AG04449 (cell line): ENCODE measurements at regions of chr19 and their contacts with region 1.

Region 1: GRCh38 chr19:7919610-7920518 is at the start of gene SNAPC2:
- DNase-seq: peak; percentile 61
- H3K4me3 ChIP-seq: peak within 1 kb of the TSS; percentile 78
- CTCF ChIP-seq: no peak

Region 2: GRCh38 chr19:7852851-7853769 is 66.8 kb before region 1 on chr19:
- CTCF ChIA-PET with region 1: interaction called, 18 read pairs
- POLR2A ChIA-PET with region 1: no interaction called
- DNase-seq: no peak
- H3K4me3 ChIP-seq: no peak overlapping the region
- CTCF ChIP-seq: peak; percentile 86

Region 3: DNA sequence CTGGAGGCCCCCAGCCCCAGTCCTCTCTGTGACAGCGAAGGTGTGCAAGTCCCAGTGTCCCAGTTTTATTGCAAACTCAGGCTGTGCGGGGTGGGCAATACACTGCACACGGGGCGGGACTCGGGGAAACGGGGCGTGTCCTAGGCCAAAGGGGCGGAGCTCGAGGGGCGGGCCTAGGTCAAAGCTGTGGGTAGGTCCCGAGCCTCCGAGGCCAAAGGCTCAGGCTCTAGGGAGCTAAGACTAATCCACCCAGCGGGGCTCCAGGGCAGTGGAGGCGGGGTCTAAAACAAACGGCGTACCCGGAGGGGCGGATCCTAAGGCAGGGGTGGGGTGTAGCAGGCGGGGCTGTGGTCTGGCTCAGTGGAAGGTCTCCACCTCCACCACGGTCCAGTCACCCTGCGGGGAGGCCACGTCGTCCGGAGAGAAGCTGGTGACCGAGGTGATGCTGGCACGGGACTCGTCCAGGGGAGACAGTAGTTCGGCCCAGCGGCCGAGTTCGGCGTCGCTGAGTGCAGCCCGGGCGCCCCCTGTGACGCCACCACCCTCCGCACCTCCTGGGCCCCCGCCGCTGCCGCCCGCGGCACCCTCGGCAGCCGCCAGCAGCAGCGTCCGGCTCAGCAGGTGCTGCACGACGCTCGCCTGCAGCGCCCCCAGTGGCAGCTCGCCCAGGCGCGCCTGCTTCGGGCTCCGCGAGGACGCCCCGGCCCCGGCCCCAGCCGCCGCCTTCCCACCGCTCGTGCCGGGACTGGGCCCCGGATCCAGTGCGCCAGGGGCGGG is 51.0 kb before region 1 on chr19:
- CTCF ChIA-PET with region 1: interaction called, 29 read pairs
- POLR2A ChIA-PET with region 1: interaction called, 6 read pairs
- DNase-seq: no peak
- H3K4me3 ChIP-seq: peak overlapping the region; percentile 50
- CTCF ChIP-seq: peak; percentile 73

Region 4: GRCh38 chr19:7903244-7904073 is 16.4 kb before region 1 on chr19 and contains the start of gene MAP2K7:
- CTCF ChIA-PET with region 1: interaction called, 11 read pairs
- POLR2A ChIA-PET with region 1: interaction called, 13 read pairs
- DNase-seq: peak; percentile 88
- H3K4me3 ChIP-seq: peak within 1 kb of the TSS; percentile 91
- CTCF ChIP-seq: peak; percentile 72

Region 5: DNA sequence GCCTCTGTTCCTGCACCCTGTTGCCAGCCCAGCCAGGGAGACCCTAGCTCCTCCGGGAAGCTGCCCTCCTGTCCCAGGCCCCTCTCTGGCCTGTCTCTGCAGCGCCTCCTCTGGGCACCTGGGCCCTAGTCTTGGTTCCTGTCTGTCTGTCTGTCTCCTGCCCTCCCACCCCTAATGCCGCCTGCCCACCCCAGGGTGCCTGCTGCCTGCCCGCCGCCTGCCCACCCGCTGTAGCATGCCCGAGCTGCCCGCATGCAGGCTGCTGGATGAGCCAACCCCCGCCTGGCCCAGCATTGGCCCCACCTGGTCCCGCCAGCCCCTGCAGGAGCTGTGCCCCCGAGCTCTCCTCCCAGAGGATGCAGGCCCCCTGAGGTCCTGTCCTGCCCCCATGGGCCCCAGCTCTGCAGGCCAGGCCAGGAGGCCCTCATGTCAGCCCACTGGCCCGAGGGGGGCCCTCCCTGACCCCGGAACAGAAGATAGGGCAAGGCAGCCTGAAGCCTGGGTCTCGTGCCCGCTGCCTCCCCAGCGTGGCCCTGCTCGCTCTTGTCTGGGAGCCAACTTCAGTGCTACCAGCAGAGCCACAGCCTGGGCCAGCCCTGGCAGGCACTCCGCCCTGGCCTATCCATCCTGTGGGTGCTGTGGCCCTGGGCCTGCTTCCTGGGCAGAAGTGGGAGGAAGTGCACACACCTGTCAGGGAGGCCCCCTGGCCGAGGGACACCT is 11.0 kb before region 1 on chr19:
- CTCF ChIA-PET with region 1: interaction called, 11 read pairs
- POLR2A ChIA-PET with region 1: interaction called, 13 read pairs
- DNase-seq: no peak
- H3K4me3 ChIP-seq: no peak overlapping the region
- CTCF ChIP-seq: no peak

Region 6: DNA sequence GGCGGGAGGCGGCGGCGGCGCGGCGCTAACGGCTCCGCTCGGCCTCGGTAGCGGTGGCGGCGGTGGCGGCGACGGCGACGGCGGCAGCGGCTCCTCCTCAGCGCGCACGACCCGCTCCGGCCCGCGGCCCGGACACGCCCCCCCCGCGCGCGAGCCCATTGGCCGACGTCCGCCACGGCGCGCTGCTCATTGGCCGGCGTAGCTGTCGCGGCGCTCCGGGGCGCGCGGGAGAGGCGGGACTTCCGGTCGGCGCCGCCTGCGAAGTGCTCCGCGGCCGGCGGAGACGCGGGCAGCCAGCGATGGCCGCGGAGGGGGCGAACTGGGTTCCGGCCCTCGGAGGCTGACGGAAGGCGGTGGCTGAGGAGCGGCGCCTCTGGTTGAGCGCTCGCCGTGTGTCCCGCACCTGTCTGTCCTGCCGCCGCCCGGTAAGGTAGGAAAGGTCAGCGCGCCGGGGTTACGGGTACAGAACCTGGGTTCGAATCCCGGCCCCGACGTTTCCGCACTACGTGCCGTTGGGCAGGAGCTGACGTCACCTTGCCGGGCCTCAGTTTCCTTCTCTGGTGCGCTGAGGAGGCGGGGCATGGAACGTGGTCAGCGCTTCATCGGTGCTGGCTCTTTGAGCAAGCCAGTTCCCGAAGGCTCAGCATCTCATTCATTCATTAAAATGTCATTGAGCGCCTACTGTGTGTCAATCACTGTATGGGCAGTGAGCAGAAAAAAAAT is 85.8 kb after region 1 on chr19 and contains the start of gene ELAVL1:
- CTCF ChIA-PET with region 1: interaction called, 11 read pairs
- POLR2A ChIA-PET with region 1: no interaction called
- DNase-seq: peak; percentile 7
- H3K4me3 ChIP-seq: peak within 1 kb of the TSS; percentile 97
- CTCF ChIP-seq: no peak

Region 7: DNA sequence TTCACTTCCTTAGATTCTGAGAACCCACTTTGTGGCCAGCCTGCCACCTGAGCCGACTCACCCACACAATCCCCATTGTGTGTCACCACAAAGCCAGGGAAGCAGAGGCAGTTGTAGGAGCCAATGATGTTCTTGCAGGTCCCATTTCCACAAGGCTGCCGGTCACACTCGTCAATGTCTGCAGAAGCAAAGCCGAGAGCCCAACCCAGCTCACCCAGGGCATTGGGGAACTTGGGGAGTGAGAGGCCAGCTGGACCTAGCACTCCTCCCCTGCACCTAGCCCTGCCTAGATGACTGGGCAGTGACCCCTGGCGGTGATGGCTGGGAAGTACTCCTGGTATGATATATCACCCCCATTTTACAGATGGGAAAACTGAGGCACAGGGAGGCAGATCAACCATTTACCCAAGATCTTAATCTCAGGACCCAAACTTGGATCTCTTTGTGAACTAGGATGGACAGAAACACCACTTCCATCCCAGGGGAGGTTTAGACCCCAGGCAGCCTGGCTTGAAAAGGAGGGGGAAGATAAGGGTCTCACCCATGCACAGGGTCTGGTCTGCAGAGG is 176.1 kb after region 1 on chr19:
- CTCF ChIA-PET with region 1: no interaction called
- POLR2A ChIA-PET with region 1: no interaction called
- DNase-seq: no peak
- H3K4me3 ChIP-seq: no peak overlapping the region
- CTCF ChIP-seq: no peak